Sigmoid colon (tissue), 7 donors: ENCODE measurements at regions of chr7 and their contacts with region 1.

Region 1: GRCh38 chr7:116929914-116930913 is 23.1 kb upstream of the ST7 start:
- DNase-seq: peak; percentile 95
- H3K4me3 ChIP-seq: no peak overlapping the region
- H3K27ac ChIP-seq: no peak overlapping the region
- H3K4me1 ChIP-seq: peaks cover 0 to 8% (median 0%) of the 10 kb centered on the region in 4 donors
- H3K27me3 ChIP-seq: no peaks in the 10 kb centered on the region
- CTCF ChIP-seq: peak; percentile 73 to 91 (median 84)
- EP300 ChIP-seq: no peak
- POLR2A ChIP-seq: no peak

Region 2: GRCh38 chr7:116984917-116985316 is 54.7 kb after region 1 on chr7:
- intact Hi-C with region 1: loop called (anchors 2 kb)
- DNase-seq: no peak
- H3K4me3 ChIP-seq: no peak overlapping the region
- H3K27ac ChIP-seq: no peak overlapping the region
- H3K4me1 ChIP-seq: peaks cover 0 to 4% (median 0%) of the 10 kb centered on the region in 4 donors
- H3K27me3 ChIP-seq: no peaks in the 10 kb centered on the region
- CTCF ChIP-seq: peak; percentile 43 to 60 (median 52)
- EP300 ChIP-seq: no peak
- POLR2A ChIP-seq: no peak

Region 3: DNA sequence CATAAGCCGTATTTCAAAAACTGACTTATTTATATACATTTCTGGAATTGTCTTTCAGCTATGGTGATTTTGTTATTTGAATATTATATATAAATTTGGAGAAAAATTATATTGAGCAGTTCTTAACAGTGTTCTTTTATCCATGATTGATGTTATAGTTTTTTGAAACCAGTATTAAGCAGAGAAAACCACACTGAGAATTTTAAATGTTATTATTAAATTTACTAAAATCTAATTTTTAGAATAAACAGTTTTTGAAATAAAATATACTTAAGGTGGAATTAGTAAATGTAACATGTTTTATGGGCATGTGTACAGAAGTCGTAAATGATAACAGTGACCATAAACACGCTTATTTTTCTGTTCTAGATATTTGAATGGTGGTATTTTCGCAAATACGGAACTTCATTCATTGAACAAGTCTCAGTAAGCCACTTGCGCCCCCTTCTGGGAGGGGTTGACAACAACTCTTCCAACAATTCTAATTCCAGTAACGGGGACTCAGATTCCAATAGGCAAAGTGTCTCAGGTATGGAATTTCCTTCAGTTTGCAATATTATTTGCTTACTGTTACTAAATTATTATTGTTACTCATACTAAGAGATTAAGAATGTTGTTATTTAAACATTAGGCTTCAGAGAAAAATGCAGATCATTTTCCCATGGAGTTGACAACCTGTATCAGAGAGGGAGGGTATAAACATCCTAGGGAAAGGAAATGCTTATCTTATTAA is 189.1 kb after region 1 on chr7:
- intact Hi-C with region 1: loop called (anchors 2 kb)
- DNase-seq: peak; percentile 87
- H3K4me3 ChIP-seq: no peak overlapping the region
- H3K27ac ChIP-seq: no peak overlapping the region
- H3K4me1 ChIP-seq: peaks cover 0 to 23% (median 11%) of the 10 kb centered on the region in 4 donors
- H3K27me3 ChIP-seq: no peaks in the 10 kb centered on the region
- CTCF ChIP-seq: peak; percentile 75 to 85 (median 82)
- EP300 ChIP-seq: no peak
- POLR2A ChIP-seq: no peak

Region 4: DNA sequence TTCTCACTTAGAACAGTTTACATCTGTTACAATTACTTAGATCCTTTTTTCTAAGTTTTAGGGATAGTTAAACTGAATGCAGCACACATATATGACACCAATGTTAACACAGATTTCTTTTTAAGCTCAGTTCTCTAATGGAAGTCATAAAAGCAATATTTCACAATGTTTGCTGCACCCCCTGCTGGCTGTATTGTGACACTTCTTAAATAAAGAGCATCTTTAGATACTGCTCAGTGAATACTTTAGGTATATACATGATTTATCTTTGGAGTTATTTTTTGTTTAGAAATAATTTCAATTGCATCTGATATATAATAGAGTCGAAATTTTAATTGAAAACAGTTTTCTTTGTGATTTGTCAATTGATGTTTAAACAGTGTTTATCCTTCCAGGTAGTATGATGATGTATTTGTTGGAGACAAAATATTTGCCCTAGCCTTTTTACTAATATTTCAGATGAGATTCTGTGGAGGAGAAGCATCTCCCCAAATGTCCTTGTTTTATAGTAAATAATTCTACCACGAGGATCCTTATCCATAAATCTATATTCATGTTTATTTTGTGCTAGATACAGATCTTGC is 197.5 kb after region 1 on chr7:
- intact Hi-C with region 1: loop called (anchors 2 kb)
- DNase-seq: peak; percentile 77
- H3K4me3 ChIP-seq: no peak overlapping the region
- H3K27ac ChIP-seq: no peak overlapping the region
- H3K4me1 ChIP-seq: peaks cover 0 to 28% (median 16%) of the 10 kb centered on the region in 4 donors
- H3K27me3 ChIP-seq: no peaks in the 10 kb centered on the region
- CTCF ChIP-seq: peak; percentile 50 to 76 (median 70)
- EP300 ChIP-seq: no peak
- POLR2A ChIP-seq: no peak